Activated naive CD4-positive, alpha-beta T cell treated with anti-CD3 and anti-CD28 coated beads for 36 hours (primary cell): ENCODE measurements at regions of chr11 and their contacts with region 1.

Region 1: DNA sequence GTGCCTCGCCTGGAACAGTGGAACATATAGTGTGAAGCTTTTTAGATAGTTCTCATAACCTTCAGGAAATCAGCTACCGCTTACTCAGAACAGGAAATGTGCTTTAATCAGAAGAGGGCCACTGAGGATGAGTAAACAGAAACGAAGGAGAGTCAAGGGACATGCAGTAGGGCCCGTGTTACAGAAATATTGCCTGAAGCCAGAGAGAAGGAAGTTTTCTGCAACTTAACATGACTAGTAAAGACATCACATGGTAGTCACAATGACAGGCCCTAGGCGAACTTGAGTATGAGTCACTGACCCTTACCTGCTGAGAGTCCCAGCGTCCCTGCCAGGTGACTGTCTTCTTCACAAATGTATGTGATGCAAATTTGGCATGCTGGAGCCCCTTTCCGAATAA is 39.4 kb downstream of the CARD18 start:
- DNase-seq: peak; percentile 42
- H3K4me3 Mint-ChIP-seq: no peak overlapping the region
- H3K27ac Mint-ChIP-seq: no peak overlapping the region
- H3K4me1 Mint-ChIP-seq: peaks cover 34% of the 10 kb centered on the region
- H3K27me3 Mint-ChIP-seq: no peaks in the 10 kb centered on the region

Region 2: DNA sequence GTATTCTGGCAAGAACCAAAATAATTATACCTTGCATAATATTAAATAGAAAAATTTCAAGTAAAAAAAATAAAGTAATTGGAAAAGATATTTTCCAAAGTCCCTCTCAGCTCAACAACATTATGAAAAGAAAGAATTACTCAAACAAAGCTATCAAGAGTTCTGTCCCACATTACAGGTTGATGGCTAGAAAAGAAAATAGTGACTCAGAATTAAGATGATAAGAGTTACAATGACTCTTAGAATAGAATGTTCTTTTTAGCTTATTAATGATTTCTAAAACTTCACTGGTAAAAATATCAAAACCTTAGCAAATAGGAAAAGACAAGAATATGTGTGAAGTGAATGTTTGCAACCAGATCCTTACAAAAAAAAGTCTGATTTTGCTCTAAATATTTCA is 623.8 kb before region 1 on chr11:
- CTCF ChIA-PET with region 1: no interaction called
- intact Hi-C with region 1: no loop called
- DNase-seq: no peak
- H3K4me3 Mint-ChIP-seq: no peak overlapping the region
- H3K27ac Mint-ChIP-seq: no peak overlapping the region
- H3K4me1 Mint-ChIP-seq: no peaks in the 10 kb centered on the region
- H3K27me3 Mint-ChIP-seq: peaks cover 7% of the 10 kb centered on the region

Region 3: GRCh38 chr11:104694259-104695064 is 405.7 kb before region 1 on chr11:
- CTCF ChIA-PET with region 1: no interaction called
- intact Hi-C with region 1: no loop called
- DNase-seq: no peak
- H3K4me3 Mint-ChIP-seq: no peak overlapping the region
- H3K27ac Mint-ChIP-seq: no peak overlapping the region
- H3K4me1 Mint-ChIP-seq: peaks cover 7% of the 10 kb centered on the region
- H3K27me3 Mint-ChIP-seq: no peaks in the 10 kb centered on the region

Region 4: DNA sequence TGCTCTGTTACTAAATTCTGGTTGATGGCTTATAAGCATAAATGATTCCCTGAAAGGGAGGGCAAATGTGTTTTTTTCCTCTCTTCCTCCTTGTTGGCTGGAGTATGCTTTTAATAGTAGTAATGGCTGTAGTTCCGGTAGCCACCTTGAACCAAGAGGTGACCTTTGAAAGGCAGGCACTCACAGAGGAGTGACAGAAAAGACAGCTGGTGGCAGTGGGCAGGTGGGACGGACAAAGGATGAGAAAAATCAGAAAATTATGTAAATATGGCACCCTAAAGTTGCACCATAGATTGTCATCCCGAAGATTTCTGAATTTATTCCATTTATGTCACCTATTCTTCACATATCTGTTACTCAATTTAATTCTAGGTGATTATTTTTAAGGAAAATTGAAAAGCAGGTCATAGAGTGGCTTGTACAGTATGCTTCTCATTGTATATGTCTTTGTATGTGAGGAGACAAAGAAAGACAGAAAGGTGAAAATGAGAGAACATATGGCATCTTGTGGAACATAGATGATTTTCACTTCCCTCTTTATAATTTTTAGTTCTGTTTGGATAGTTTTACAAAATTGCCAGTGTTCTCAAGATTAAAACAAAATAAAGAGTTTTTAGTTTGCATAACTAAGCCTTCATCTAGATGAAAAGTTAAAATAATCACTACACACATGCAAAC is 218.9 kb before region 1 on chr11:
- CTCF ChIA-PET with region 1: no interaction called
- intact Hi-C with region 1: no loop called
- DNase-seq: no peak
- H3K4me3 Mint-ChIP-seq: no peak overlapping the region
- H3K27ac Mint-ChIP-seq: no peak overlapping the region
- H3K4me1 Mint-ChIP-seq: peaks cover 30% of the 10 kb centered on the region
- H3K27me3 Mint-ChIP-seq: no peaks in the 10 kb centered on the region

Region 5: DNA sequence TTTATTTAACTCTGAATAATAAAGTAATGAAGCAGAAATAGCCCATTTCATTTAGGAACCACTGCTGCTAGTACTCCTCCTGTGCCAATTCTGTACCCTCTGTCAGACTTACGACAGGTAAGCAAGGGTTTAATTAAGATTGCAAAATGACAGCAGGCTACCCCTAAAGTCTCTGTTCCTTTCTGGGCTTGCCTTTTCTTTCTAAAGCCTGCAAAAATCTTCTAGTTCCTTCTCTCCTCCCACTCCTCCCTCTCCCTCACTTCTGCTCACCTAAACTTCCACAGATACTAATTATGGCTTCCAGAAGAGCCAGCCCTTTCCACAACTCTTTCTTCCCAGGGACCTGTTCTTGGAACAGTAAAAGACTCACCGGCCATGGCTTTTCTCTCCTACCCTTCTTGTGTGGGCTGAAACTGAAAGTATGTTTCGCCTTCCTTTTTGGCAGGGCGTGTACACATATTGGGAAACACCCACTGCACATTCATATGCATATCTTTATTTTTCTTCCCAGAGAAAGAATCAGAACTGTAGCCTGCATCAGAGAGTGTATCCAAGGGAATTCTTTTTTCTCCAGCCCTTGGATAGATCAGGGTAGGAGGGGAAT is 55.2 kb before region 1 on chr11 and contains the start of gene CARD16:
- CTCF ChIA-PET with region 1: no interaction called
- intact Hi-C with region 1: loop called (anchors 2 kb)
- DNase-seq: peak; percentile 64
- H3K4me3 Mint-ChIP-seq: peak within 1 kb of the TSS; percentile 83
- H3K27ac Mint-ChIP-seq: peak within 1 kb of the TSS; percentile 82
- H3K4me1 Mint-ChIP-seq: peaks cover 46% of the 10 kb centered on the region
- H3K27me3 Mint-ChIP-seq: no peaks in the 10 kb centered on the region
- total RNA-seq, gene CARD16: 9.5 to 10.9 TPM

Region 6: GRCh38 chr11:105081412-105082087 is 18.7 kb before region 1 on chr11:
- CTCF ChIA-PET with region 1: no interaction called
- intact Hi-C with region 1: loop called (anchors 2 kb)
- DNase-seq: no peak
- H3K4me3 Mint-ChIP-seq: no peak overlapping the region
- H3K27ac Mint-ChIP-seq: no peak overlapping the region
- H3K4me1 Mint-ChIP-seq: peaks cover 20% of the 10 kb centered on the region
- H3K27me3 Mint-ChIP-seq: peaks cover 8% of the 10 kb centered on the region